ENCODE measurements at regions of chr5 and their contacts with region 1.

Region 1: GRCh38 chr5:75639535-75640311 is 28.5 kb downstream of the ANKDD1B start:
- DNase-seq: no peak
- H3K4me3 Mint-ChIP-seq: no peak overlapping the region
- H3K27ac Mint-ChIP-seq: no peak overlapping the region
- H3K4me1 Mint-ChIP-seq: no peaks in the 10 kb centered on the region
- H3K27me3 Mint-ChIP-seq: peaks cover 2% of the 10 kb centered on the region

Region 2: DNA sequence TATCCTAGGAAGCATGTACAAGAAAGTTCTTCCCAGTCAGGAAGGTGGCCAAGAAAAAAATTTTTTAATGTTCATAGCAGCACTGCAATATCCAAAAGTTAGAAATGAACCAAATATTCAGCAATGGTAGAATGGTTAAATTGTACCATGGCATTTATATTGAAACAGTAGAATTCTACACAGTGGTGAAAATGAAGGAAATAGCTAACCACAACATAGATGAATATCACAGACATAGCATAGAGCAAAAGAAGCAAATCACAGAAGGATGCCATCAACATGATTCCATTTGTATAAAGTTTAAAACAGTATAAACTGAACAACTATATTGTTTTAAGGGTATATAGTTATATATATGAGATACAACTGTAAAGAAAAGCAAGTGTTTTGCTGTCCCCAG is 39.2 kb before region 1 on chr5:
- CTCF ChIA-PET with region 1: interaction called, 10 read pairs
- intact Hi-C with region 1: no loop called
- DNase-seq: no peak
- H3K4me3 Mint-ChIP-seq: no peak overlapping the region
- H3K27ac Mint-ChIP-seq: no peak overlapping the region
- H3K4me1 Mint-ChIP-seq: peaks cover 4% of the 10 kb centered on the region
- H3K27me3 Mint-ChIP-seq: no peaks in the 10 kb centered on the region

Region 3: GRCh38 chr5:75964008-75964407 is 324.3 kb after region 1 on chr5:
- CTCF ChIA-PET with region 1: no interaction called
- intact Hi-C with region 1: no loop called
- DNase-seq: no peak
- H3K4me3 Mint-ChIP-seq: no peak overlapping the region
- H3K27ac Mint-ChIP-seq: no peak overlapping the region
- H3K4me1 Mint-ChIP-seq: no peaks in the 10 kb centered on the region
- H3K27me3 Mint-ChIP-seq: peaks cover 14% of the 10 kb centered on the region